Activated B cell treated with CpG ODN at 0.5 μM for 24 hours (primary cell): ENCODE measurements at regions of chr13 and their contacts with region 1.

Region 1: DNA sequence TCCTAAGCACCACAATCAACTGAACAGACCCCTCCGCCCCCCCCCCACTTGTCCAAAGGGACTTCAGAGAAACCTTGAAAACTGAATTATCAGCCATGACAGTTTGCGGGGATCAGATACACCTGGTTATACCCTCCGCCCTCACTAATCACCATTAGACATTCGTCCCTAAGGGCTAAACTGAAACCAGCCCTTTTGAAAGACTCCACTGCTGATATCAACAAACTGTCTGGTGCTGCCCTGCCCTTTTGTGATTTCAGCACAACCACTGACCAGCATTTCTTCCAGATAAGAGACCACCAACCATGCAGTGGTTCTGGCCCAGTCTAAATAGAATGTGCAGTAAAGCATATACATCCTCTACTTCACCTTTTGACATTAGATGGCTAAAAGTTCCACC is 1422.9 kb downstream of the EFNB2 start:
- DNase-seq: no peak
- ATAC-seq: no peak
- H3K4me3 Mint-ChIP-seq: no peak overlapping the region
- H3K27ac Mint-ChIP-seq: no peak overlapping the region
- H3K4me1 Mint-ChIP-seq: no peaks in the 10 kb centered on the region
- H3K27me3 Mint-ChIP-seq: no peaks in the 10 kb centered on the region
- CTCF ChIP-seq: no peak

Region 2: GRCh38 chr13:105070452-105070851 is 42.1 kb before region 1 on chr13:
- CTCF ChIA-PET with region 1: no interaction called
- POLR2A ChIA-PET with region 1: no interaction called
- intact Hi-C with region 1: no loop called
- DNase-seq: no peak
- ATAC-seq: no peak
- H3K4me3 Mint-ChIP-seq: no peak overlapping the region
- H3K27ac Mint-ChIP-seq: no peak overlapping the region
- H3K4me1 Mint-ChIP-seq: no peaks in the 10 kb centered on the region
- H3K27me3 Mint-ChIP-seq: no peaks in the 10 kb centered on the region
- CTCF ChIP-seq: no peak

Region 3: DNA sequence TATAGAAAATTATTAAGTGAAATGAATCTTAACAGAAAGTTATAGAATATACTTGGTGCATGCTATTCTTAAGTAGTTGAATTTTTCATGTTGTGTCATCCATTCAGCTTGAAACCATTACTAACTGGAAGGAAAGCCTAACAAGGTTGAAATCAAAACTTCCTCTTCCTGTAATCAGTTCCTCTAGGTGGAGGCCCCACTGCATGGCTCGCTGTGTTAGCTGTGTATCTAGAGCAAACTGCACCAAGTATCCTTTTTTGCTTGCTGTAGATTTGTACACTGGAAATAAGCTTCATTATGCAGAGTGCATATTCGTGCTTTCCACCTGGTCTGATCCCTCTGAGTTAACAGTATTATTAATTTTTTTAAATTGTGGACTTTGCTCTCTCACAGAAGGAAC is 276.8 kb after region 1 on chr13:
- CTCF ChIA-PET with region 1: no interaction called
- POLR2A ChIA-PET with region 1: no interaction called
- intact Hi-C with region 1: no loop called
- DNase-seq: no peak
- ATAC-seq: no peak
- H3K4me3 Mint-ChIP-seq: no peak overlapping the region
- H3K27ac Mint-ChIP-seq: peak overlapping the region; percentile 3
- H3K4me1 Mint-ChIP-seq: no peaks in the 10 kb centered on the region
- H3K27me3 Mint-ChIP-seq: no peaks in the 10 kb centered on the region
- CTCF ChIP-seq: no peak

Region 4: DNA sequence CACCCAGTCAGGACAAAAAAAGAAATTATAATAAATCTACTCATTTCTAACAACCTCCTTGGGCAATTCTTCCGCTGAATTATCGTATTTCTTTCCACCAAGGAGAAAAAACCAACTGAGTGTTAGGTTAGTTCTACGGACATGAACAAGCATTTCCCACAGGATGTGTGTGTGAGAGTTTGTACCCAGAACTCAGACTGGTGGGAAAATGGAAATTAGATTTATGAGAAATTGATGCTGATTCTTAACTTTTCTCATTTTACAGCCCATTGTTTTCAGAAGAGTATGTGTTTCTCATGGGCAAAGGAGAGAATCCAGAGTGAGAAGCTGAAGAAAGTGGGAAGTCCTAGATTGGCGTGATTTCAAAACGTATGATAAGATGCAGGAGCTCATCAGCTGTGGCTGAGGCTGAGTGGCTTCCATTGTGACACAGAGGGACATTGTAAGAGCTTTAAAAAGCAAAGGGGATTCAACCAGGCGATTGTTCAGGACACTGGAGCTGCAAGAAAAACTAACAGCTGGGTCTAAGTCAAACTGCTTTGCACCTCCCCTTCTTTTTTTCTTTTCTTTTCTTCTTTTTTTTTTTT is 1640.1 kb after region 1 on chr13:
- CTCF ChIA-PET with region 1: no interaction called
- POLR2A ChIA-PET with region 1: interaction called, 10 read pairs
- intact Hi-C with region 1: no loop called
- DNase-seq: no peak
- ATAC-seq: no peak
- H3K4me3 Mint-ChIP-seq: no peak overlapping the region
- H3K27ac Mint-ChIP-seq: no peak overlapping the region
- H3K4me1 Mint-ChIP-seq: no peaks in the 10 kb centered on the region
- H3K27me3 Mint-ChIP-seq: peaks cover 3% of the 10 kb centered on the region
- CTCF ChIP-seq: no peak